SK-N-SH (cell line): ENCODE measurements at regions of chr9 and their contacts with region 1.

Region 1: DNA sequence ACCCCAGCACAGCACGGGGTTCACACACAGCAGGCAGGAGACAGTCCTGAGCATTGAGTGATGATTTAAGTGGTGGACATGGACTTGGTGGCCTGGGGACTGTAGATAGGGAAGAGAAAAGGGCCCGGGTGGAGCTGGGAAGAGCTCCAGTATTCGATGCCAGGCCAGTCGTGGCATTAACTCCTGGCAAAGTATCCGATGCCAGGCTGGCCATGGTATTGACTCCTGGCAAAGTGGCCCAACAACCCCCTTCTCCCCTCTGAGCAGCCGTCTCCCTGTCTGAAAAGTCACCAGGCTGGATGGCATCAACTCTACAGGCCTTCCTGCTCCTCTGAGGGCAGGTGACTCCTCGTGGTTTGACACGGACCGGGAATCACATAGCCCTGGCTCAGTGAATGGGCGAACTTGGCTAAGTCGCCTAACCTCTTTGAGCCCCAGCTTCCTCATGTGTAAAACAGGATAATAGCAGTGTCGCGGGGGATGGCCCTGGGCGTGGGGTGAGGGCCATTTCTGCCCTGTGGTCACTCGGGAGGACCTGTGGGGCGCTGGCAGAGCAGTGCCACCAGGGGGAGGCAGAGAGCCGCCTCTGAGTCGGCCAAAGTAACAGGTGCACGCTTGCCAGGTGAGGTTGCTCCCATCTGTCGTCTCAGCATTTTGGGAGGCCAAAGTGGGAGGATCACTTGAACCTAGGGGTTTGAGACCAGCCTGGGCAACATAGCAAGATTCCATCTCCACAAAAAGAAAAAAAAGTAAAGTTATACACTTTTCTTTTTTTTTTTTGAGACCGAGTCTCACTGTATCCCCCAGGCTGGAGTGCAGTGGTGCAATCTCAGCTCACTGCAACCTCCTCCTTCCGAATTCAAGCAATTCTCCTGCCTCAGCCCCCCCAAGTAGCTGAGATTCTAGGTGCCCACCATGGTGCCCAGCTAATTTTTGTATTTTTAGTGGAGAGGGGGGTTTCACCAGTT is 5.7 kb upstream of the SEC16A start:
- DNase-seq: peak; percentile 81
- H3K4me3 ChIP-seq: peak overlapping the region in 1 of 2 experiments; percentile 55; a peak in 1 of 4 replicates
- H3K27ac ChIP-seq: no peak overlapping the region
- H3K4me1 ChIP-seq: peaks cover 0 to 16% of the 10 kb centered on the region in 2 experiments; a peak in 1 of 4 replicates
- H3K27me3 ChIP-seq: no peaks in the 10 kb centered on the region
- CTCF ChIP-seq: peak; percentile 99
- EP300 ChIP-seq: no peak
- RAD21 ChIP-seq: peak; percentile 94

Region 2: DNA sequence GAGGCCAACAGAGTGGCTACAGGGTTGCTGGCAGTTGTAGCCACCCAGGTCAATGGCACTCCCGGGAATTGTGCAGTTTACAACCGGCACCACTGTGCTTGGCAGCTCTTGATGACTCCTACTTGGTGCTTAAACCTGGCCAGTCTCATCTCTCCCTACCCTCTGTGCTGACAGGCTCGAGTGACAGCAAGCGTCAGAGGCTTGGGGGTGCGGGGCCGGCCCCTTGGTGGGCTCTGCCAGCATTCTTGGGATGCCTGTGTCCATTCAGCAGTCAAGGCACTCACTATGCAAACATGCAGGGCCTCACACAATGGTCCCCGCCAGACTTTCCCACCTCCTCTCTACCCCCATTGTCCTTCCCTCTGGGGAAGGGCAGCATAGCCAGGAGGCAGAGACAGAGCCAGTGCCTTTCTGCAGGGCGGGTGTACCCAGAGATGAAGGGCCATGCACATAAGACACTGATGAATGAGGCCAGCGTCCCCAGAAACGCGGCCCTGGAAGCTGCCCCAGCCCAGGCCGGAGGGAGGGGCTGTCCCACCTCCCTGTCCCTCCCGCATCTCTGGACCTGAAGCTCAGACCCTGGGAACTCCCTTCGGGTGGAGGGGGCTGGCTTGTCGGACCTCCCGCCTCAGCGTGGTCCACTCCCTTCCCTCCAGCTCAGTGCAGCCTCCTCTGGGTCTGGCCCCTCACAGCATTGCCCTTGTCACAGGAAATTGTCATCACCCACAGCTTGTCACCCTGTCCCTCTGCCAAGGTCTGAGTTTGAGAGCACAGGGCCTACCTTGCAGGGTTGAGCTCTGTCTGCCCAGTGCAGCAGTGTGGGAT is 83.7 kb after region 1 on chr9:
- CTCF ChIA-PET with region 1: interaction called, 12 read pairs
- POLR2A ChIA-PET with region 1: no interaction called
- DNase-seq: no peak
- H3K4me3 ChIP-seq: no peak overlapping the region
- H3K27ac ChIP-seq: no peak overlapping the region
- H3K4me1 ChIP-seq: peaks cover 11 to 14% of the 10 kb centered on the region in 2 experiments; a peak in 3 of 4 replicates
- H3K27me3 ChIP-seq: no peaks in the 10 kb centered on the region
- CTCF ChIP-seq: no peak
- EP300 ChIP-seq: no peak
- RAD21 ChIP-seq: no peak

Region 3: GRCh38 chr9:136619742-136620440 is 131.4 kb after region 1 on chr9:
- CTCF ChIA-PET with region 1: interaction called, 320 read pairs
- POLR2A ChIA-PET with region 1: interaction called, 8 read pairs
- DNase-seq: no peak
- H3K4me3 ChIP-seq: no peak overlapping the region
- H3K27ac ChIP-seq: no peak overlapping the region
- H3K4me1 ChIP-seq: peaks cover 2% of the 10 kb centered on the region in 2 experiments; a peak in 1 of 4 replicates
- H3K27me3 ChIP-seq: no peaks in the 10 kb centered on the region
- CTCF ChIP-seq: no peak
- EP300 ChIP-seq: no peak
- RAD21 ChIP-seq: no peak

Region 4: DNA sequence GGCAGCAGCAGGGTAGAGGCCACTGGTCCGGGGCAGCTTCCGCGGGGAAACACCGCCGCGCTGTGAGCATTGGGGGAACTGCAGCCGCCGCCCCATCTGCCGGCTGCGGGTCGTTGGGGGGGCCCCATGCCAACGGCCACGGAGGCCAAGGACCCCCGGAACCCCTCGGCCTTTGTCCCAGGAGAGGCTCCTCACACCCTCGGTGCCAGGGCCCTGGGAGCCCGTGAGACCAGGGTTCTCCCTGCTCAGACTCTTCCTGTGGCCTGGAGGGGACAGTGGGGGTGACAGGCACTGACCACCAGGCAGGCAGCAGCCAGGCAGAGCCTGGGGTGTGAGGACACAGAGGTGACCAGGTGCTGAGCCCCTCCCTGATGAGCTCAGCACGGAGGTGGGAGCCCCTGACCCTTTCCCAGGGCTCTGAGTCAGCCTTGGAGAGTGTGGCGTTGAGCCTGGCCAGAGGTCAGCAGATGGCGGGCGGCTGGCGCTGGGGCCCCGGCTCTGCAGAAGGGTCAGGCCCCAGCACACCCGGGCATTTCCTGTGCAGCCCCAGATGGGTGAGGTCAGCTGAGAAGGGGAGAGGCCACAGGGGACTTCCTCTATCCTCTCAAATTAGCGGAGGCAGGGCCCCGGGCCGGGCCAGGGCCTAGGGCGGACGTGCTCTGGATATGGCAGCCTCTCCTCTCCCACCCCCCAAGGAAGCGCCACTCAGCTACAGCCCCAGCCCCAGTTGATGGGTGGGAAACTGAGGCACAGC is 156.2 kb after region 1 on chr9:
- CTCF ChIA-PET with region 1: interaction called, 15 read pairs
- POLR2A ChIA-PET with region 1: no interaction called
- DNase-seq: peak; percentile 70
- H3K4me3 ChIP-seq: no peak overlapping the region; a peak in 1 of 4 replicates
- H3K27ac ChIP-seq: peak overlapping the region in 1 of 2 experiments; percentile 92; a peak in 1 of 4 replicates
- H3K4me1 ChIP-seq: peaks cover 0 to 33% of the 10 kb centered on the region in 2 experiments; a peak in 1 of 4 replicates
- H3K27me3 ChIP-seq: no peaks in the 10 kb centered on the region
- CTCF ChIP-seq: no peak
- EP300 ChIP-seq: no peak
- RAD21 ChIP-seq: no peak